Left lung (tissue), 14 donors: ENCODE measurements at regions of chr10 and their contacts with region 1.

Region 1: DNA sequence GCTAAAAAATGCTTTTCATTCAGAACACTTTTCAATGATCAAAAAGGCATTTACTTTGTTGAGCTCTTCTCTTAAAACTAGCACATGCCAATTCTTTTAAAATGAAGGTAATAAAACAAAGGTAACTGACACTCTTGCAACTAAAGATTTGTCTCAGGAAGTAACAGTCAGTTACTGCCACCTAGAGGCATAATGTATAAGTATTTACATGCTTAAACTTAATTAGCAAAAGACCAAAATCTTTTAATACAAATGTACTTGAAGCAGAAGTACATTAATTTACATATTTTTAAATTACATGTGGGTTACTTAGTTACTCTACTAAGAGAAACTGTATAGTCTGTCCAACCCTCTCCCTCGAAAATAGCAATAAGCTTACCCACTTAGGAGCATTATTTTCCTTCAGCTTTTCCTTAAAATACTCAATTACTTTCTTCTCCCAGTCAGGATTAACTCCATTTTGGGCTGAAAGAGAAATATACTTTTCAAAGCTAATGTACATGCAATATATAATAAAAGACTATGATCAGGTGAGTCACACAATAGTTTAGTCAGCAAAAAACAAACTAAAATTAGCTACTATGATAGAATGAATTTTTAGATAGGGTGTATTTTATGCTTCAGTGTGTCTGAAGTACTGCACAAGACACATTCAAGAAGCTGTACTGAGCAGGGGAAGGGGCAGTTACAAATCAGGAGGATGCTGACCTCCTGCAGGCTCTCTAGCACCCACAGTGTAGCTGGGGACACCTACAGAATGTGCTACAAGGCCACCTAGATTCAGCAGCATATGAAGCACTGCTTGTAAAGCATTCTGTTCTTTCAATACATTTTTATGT is 13.0 kb downstream of the MCMBP start:
- DNase-seq: peak in 2 of 4 donors; percentile 18 to 34
- ATAC-seq: peak; percentile 76
- H3K4me3 ChIP-seq: no peak overlapping the region
- H3K27ac ChIP-seq: no peak overlapping the region
- H3K4me1 ChIP-seq: peaks cover 0 to 30% of the 10 kb centered on the region in 2 donors
- H3K27me3 ChIP-seq: no peaks in the 10 kb centered on the region
- CTCF ChIP-seq: peak in 1 of 2 donors; percentile 53

Region 2: DNA sequence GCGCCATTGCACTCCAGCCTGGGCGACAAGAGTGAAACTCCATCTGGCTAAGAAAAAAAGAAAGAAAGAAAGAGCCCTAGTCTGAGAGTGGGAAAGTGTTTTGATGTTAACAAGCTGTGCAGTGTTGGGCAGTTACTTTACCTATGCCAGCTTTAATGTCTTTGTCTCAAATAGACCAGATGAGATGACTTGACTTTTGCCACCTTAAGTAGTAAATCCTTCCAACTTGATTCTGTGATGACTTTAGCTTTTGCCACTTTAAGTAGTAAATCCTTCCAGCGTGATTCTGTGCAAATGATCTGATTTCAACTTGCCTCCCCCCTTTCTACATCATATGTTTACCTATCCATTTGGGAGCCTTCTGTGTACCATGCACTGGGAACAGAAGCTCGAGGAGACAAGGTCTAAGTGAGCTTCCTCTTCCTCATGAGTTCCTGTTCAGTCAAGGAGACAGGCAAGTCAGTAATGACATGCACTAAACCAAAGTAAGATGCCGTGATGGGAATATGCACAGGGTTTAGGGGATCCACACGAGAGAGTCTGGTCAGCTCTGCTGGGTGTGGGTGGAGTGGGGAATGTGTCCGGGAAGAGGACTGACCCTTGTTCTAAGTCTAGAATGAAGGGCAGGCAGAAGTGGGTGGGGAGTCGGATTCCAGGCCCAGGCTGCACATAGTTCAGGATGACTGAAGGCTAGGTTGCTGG is 116.5 kb before region 1 on chr10:
- intact Hi-C with region 1: loop called in 1 of 2 experiments (anchors 10 kb)
- DNase-seq: no peak
- ATAC-seq: no peak
- H3K4me3 ChIP-seq: no peak overlapping the region
- H3K27ac ChIP-seq: no peak overlapping the region
- H3K4me1 ChIP-seq: peaks cover 2 to 5% of the 10 kb centered on the region in 2 donors
- H3K27me3 ChIP-seq: no peaks in the 10 kb centered on the region
- CTCF ChIP-seq: no peak